K562 (cell line): ENCODE measurements at regions of chr1 and their contacts with region 1.

Region 1: DNA sequence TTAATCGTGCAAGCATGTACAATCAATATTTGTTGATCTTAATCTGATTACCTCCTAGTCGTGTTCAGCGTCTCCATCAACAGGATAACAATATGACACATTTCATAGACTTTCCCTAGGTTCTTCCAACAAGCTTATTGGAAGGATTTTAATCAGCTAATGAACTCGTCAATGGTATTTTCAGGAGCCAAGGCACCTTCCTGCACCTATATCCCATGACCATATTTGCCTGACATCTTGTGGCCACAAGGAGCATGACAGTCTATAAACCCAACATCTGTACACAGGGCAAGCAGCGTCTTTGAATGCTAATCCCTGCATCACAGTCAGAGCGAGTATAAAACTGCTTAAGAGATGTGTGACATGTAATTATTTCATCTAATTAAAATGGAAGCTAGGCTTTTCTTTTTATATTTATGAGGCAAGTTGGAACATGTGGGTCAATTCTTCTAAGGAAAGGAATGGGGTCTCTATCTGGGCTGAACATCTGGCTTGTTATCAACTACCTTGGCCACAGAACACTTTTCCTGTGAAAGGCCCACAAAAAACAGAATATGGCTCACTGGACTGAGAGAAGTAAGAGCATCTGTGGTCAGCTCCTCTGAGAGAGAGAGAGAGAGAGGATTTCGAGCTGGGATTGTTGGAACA is 388.8 kb downstream of the NTNG1 start:
- DNase-seq: peak; percentile 46 to 57 (median 52)
- ATAC-seq: peak; percentile 93
- H3K4me3 ChIP-seq: no peak overlapping the region
- H3K27ac ChIP-seq: no peak overlapping the region
- H3K4me1 ChIP-seq: no peaks in the 10 kb centered on the region
- H3K27me3 ChIP-seq: no peaks in the 10 kb centered on the region; a peak in 1 of 5 replicates
- CTCF ChIP-seq: peak; percentile 40 to 70 (median 69); a peak in 5 of 6 replicates
- EP300 ChIP-seq: no peak
- POLR2A ChIP-seq: no peak
- RAD21 ChIP-seq: peak; percentile 47 to 74; a peak in 3 of 4 replicates

Region 2: GRCh38 chr1:107460035-107460434 is 69.6 kb before region 1 on chr1:
- CTCF ChIA-PET with region 1: no interaction called
- POLR2A ChIA-PET with region 1: no interaction called
- in situ Hi-C with region 1: no loop called
- intact Hi-C with region 1: loop called (anchors 10 kb)
- DNase-seq: no peak
- ATAC-seq: no peak
- H3K4me3 ChIP-seq: no peak overlapping the region
- H3K27ac ChIP-seq: no peak overlapping the region
- H3K4me1 ChIP-seq: no peaks in the 10 kb centered on the region
- H3K27me3 ChIP-seq: no peaks in the 10 kb centered on the region
- CTCF ChIP-seq: no peak
- EP300 ChIP-seq: no peak
- POLR2A ChIP-seq: no peak
- RAD21 ChIP-seq: no peak

Region 3: GRCh38 chr1:107817935-107818334 is 288.3 kb after region 1 on chr1:
- CTCF ChIA-PET with region 1: no interaction called
- POLR2A ChIA-PET with region 1: no interaction called
- in situ Hi-C with region 1: no loop called
- intact Hi-C with region 1: no loop called
- DNase-seq: no peak
- ATAC-seq: no peak
- H3K4me3 ChIP-seq: no peak overlapping the region
- H3K27ac ChIP-seq: no peak overlapping the region
- H3K4me1 ChIP-seq: no peaks in the 10 kb centered on the region
- H3K27me3 ChIP-seq: no peaks in the 10 kb centered on the region
- CTCF ChIP-seq: no peak
- EP300 ChIP-seq: no peak
- POLR2A ChIP-seq: no peak
- RAD21 ChIP-seq: no peak

Region 4: GRCh38 chr1:108182959-108183700 is 653.5 kb after region 1 on chr1:
- CTCF ChIA-PET with region 1: no interaction called
- POLR2A ChIA-PET with region 1: no interaction called
- in situ Hi-C with region 1: no loop called
- intact Hi-C with region 1: no loop called
- DNase-seq: no peak
- ATAC-seq: no peak
- H3K4me3 ChIP-seq: no peak overlapping the region
- H3K27ac ChIP-seq: no peak overlapping the region
- H3K4me1 ChIP-seq: no peaks in the 10 kb centered on the region
- H3K27me3 ChIP-seq: no peaks in the 10 kb centered on the region
- CTCF ChIP-seq: no peak
- EP300 ChIP-seq: no peak
- POLR2A ChIP-seq: no peak
- RAD21 ChIP-seq: no peak